ENCODE measurements at regions of chr22 and their contacts with region 1.

Region 1: DNA sequence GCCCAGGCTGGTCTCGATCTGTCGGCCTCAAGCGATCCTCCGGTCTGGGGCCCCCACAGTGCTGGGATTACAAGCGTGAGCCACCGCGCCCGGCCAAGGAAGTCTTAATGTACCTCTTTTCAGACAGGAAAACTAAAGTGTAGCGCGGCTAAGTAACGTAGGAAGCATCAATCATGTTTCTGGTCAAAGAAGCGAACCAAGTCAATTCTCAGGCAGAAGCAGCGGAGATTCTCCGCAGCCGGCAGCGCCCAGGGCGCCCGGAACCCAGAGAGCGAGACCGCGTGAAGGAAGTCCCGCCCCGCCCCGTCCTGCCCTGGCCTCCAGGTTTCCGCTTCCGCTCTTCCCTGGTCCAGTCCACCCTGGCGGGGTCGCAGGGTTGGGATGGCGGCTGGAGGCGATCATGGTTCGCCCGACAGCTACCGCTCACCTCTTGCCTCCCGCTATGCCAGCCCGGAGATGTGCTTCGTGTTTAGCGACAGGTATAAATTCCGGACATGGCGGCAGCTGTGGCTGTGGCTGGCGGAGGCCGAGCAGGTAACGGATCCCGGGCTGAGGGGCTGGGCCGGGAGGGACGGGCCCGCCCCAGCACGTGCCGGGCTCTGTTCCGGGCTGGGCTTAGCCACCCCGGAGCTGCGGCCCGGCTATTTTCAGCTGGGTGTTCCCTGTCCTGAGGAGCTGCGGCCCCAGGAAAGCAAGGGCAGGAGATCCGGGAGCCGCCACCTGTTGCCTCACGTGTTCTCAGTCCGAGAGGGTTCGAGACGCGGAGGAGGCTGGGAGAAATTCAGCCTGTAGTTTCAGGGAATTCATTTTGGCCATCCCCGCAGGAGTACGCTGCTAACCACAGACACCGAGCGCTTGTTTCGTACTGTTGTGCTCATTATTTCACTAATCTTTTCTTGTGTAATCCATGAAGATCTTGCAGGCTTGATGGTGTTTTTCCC is at the start of gene ADSL:
- DNase-seq: peak; percentile 41
- ATAC-seq: peak; percentile 95
- H3K4me3 ChIP-seq: peak within 1 kb of the TSS; percentile 81
- H3K27ac ChIP-seq: peak within 1 kb of the TSS; percentile 92
- H3K4me1 ChIP-seq: 0 out of 2 replicates have a peak, but pooled peaks cover 3% of the 10 kb centered on the region
- H3K27me3 ChIP-seq: no peaks in the 10 kb centered on the region
- CTCF ChIP-seq: no peak
- EP300 ChIP-seq: no peak
- POLR2A ChIP-seq: peak; percentile 99
- RAD21 ChIP-seq: no peak
- polyA plus RNA-seq, gene ADSL: 230 to 313 TPM

Region 2: DNA sequence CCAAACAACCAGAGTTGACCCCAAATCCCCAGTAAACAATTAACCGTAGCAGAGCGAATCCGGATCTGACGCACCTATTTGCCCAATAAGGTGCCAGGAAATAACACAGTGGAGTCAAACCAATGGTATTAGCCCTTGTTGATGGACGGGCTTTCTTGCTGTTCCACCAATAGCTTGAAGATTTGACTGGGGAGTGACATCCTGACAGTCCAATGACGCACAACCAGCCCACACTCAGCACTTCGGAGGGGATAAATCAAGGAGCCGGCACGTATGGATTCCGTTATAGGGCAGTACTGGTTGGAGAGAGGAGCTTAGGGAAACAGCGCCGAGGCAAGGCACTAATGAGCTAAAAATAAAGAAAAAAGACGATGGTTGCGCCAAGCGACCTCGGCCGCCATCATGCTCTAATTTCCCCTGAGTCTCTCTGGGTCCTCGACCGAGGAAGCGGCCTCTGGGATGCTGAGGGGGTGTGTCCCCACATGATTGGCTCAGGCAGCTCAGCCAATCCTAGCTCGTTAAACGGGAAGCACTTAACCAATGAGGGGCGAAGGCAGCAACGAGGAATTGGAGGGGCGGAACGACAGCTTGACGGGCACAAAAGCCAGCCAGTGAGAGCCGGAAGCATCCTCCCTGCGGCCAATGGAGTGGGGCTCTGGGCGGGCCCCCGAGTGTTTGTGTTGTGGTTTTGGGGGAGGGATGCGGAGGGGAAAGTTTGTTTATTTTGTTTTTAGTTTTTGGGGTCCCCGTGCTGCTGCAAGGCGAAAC is 302.2 kb before region 1 on chr22:
- CTCF ChIA-PET with region 1: interaction called, 68 read pairs
- POLR2A ChIA-PET with region 1: interaction called, 28 read pairs
- RAD21 ChIA-PET with region 1: interaction called, 40 read pairs
- SMC1A ChIA-PET with region 1: interaction called, 67 read pairs
- in situ Hi-C with region 1: loop called (anchors 5 kb)
- intact Hi-C with region 1: loop called (anchors 1 kb)
- DNase-seq: peak; percentile 99
- ATAC-seq: peak; percentile 97
- H3K4me3 ChIP-seq: peak overlapping the region; percentile 72
- H3K27ac ChIP-seq: peak overlapping the region; percentile 81
- H3K4me1 ChIP-seq: peaks cover 9% of the 10 kb centered on the region
- H3K27me3 ChIP-seq: 0 out of 4 replicates have a peak, but pooled peaks cover 0 to 1% of the 10 kb centered on the region in 2 experiments
- CTCF ChIP-seq: no peak
- EP300 ChIP-seq: no peak
- POLR2A ChIP-seq: peak; percentile 94
- RAD21 ChIP-seq: no peak

Region 3: DNA sequence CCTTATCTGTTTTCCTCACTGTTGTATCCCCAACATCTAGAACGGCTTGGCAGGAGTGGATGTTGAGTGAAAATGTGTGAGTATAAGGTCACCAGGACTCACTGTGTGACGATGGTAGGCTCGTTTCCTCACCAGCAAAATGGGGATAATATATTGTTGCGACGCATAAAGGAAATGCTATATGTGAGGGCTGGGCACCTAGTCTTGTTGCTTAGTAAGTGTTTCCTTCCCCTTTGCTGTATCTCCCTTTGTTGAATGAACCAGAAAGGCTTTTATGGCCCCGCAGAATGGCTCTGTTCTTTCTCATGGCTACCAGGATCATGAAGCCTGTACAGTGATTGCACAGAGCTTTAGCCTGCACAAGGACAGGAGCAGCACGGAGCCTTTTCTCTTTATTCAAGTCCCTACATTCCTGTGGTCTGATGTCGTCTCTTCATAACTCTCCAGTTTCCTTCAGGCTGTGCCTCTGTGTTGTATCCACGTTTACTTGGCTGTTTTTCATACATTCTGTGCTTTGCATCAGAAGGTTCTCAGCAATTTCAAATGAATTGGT is 163.3 kb before region 1 on chr22:
- CTCF ChIA-PET with region 1: interaction called, 26 read pairs
- POLR2A ChIA-PET with region 1: interaction called, 5 read pairs
- RAD21 ChIA-PET with region 1: interaction called, 9 read pairs
- SMC1A ChIA-PET with region 1: interaction called, 6 read pairs
- in situ Hi-C with region 1: no loop called
- intact Hi-C with region 1: loop called (anchors 10 kb)
- DNase-seq: no peak
- ATAC-seq: peak; percentile 16; the same call in 2 of the 3 replicates
- H3K4me3 ChIP-seq: peak overlapping the region; percentile 19; the same call in 1 of the 2 replicates
- H3K27ac ChIP-seq: no peak overlapping the region
- H3K4me1 ChIP-seq: peaks cover 12% of the 10 kb centered on the region
- H3K27me3 ChIP-seq: no peaks in the 10 kb centered on the region
- CTCF ChIP-seq: no peak
- EP300 ChIP-seq: no peak
- POLR2A ChIP-seq: no peak
- RAD21 ChIP-seq: no peak

Region 4: GRCh38 chr22:40300884-40301672 is 45.4 kb before region 1 on chr22:
- CTCF ChIA-PET with region 1: interaction called, 5 read pairs
- POLR2A ChIA-PET with region 1: interaction called, 3 read pairs
- RAD21 ChIA-PET with region 1: no interaction called
- SMC1A ChIA-PET with region 1: interaction called, 4 read pairs
- in situ Hi-C with region 1: no loop called
- intact Hi-C with region 1: loop called (anchors 5 kb)
- DNase-seq: peak; percentile 30
- ATAC-seq: peak; percentile 98
- H3K4me3 ChIP-seq: no peak overlapping the region
- H3K27ac ChIP-seq: peak overlapping the region; percentile 33; the same call in 1 of the 2 replicates
- H3K4me1 ChIP-seq: peaks cover 11% of the 10 kb centered on the region
- H3K27me3 ChIP-seq: no peaks in the 10 kb centered on the region
- CTCF ChIP-seq: 0 out of 6 replicates have a peak, but pooled peaks of 1 of the 3 experiments have one; percentile 6
- EP300 ChIP-seq: no peak
- POLR2A ChIP-seq: no peak
- RAD21 ChIP-seq: no peak

Region 5: GRCh38 chr22:40385036-40385782 is 38.8 kb after region 1 on chr22:
- CTCF ChIA-PET with region 1: interaction called, 14 read pairs
- POLR2A ChIA-PET with region 1: no interaction called
- RAD21 ChIA-PET with region 1: no interaction called
- SMC1A ChIA-PET with region 1: interaction called, 7 read pairs
- in situ Hi-C with region 1: no loop called
- intact Hi-C with region 1: no loop called
- DNase-seq: no peak
- ATAC-seq: peak; percentile 92
- H3K4me3 ChIP-seq: peak overlapping the region; percentile 54
- H3K27ac ChIP-seq: peak overlapping the region; percentile 91
- H3K4me1 ChIP-seq: peaks cover 26% of the 10 kb centered on the region
- H3K27me3 ChIP-seq: no peaks in the 10 kb centered on the region
- CTCF ChIP-seq: 0 out of 6 replicates have a peak, but pooled peaks of 1 of the 3 experiments have one; percentile 4
- EP300 ChIP-seq: no peak; a peak in 1 of 4 replicates
- POLR2A ChIP-seq: no peak
- RAD21 ChIP-seq: no peak

Measured in GM12878 (cell line).